GM12878 (cell line): ENCODE measurements at regions of chr1 and their contacts with region 1.

Region 1: DNA sequence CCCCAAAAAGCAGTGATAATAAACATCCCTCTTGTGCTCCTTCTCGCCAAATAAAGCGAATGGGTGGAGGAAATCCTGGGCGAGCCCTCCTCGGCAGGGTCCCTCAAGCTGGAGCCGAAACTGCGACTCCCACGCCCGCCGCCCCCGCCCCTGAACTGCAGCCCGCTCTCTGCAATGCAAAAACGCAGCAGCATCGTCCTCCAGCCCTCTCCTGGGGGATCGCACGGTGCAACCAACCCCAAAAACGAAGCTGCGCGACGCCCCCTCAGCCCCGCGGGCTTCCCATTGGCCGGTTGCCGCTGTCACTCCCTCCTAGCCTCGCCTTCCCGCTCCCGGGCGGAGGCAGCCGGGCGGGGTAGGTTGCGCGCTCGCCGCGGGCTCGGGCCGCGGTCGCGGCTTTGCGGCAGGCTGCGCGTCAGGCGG is at the start of gene TMCC2:
- DNase-seq: no peak
- ATAC-seq: peak; percentile 85
- H3K4me3 ChIP-seq: peak within 1 kb of the TSS; percentile 56
- H3K27ac ChIP-seq: no peak within 1 kb of the TSS
- H3K4me1 ChIP-seq: peaks cover 30% of the 10 kb centered on the region
- H3K27me3 ChIP-seq: peaks cover 2 to 15% of the 10 kb centered on the region in 2 experiments; a peak in 3 of 4 replicates
- CTCF ChIP-seq: no peak
- EP300 ChIP-seq: no peak
- POLR2A ChIP-seq: no peak
- RAD21 ChIP-seq: no peak
- polyA plus RNA-seq, gene TMCC2: 0.06 to 0.18 TPM

Region 2: GRCh38 chr1:204975570-204976235 is 251.9 kb before region 1 on chr1:
- CTCF ChIA-PET with region 1: interaction called, 12 read pairs
- POLR2A ChIA-PET with region 1: no interaction called
- RAD21 ChIA-PET with region 1: interaction called, 8 read pairs
- SMC1A ChIA-PET with region 1: interaction called, 3 read pairs
- in situ Hi-C with region 1: no loop called
- intact Hi-C with region 1: no loop called
- DNase-seq: no peak
- ATAC-seq: peak; percentile 90
- H3K4me3 ChIP-seq: no peak overlapping the region
- H3K27ac ChIP-seq: no peak overlapping the region
- H3K4me1 ChIP-seq: peaks cover 6% of the 10 kb centered on the region
- H3K27me3 ChIP-seq: peaks cover 0 to 5% of the 10 kb centered on the region in 2 experiments; a peak in 3 of 4 replicates
- CTCF ChIP-seq: peak; percentile 84 to 89 (median 88)
- EP300 ChIP-seq: no peak
- POLR2A ChIP-seq: no peak
- RAD21 ChIP-seq: peak; percentile 79

Region 3: DNA sequence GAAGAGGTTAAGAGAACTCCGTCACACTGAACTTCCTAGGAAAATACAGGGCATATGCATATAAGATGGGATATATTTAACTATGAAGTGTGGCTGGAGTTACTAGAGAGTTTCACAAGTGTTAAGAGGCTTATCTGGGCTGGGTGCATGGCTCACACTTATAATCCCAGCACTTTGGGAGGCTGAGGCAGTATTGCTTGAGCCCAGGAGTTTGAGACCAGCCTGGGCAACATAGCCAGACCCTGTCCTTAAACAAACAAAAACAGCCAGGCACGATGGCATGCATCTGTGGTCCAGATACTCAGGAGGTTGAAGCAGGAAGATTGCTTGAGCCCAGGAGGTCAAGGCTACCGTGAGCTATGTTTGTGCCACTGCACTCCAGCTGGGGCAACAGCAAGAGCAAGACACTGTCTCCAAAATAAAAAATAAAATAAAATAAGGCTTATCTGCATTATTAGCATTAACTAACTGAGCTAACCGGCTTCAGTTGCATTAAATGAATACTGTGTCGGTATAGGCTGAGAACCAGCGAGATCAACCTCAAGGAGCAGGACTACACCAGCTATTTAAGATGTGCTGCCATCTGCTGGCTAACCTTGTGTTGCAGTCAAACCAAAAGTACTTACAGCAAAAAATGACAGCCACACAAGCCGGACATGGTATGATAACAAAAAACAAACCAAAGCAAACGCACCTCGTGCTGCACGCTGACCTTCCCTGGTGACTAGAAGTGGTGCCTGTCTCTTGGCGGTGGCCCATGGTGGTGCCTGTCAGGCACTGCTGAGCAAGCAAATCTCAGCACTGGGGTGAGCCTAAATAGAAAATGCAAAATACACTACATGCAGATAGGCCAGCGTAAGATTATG is 86.1 kb before region 1 on chr1:
- CTCF ChIA-PET with region 1: interaction called, 19 read pairs
- POLR2A ChIA-PET with region 1: no interaction called
- RAD21 ChIA-PET with region 1: interaction called, 6 read pairs
- SMC1A ChIA-PET with region 1: interaction called, 3 read pairs
- in situ Hi-C with region 1: no loop called
- intact Hi-C with region 1: no loop called
- DNase-seq: peak; percentile 30
- ATAC-seq: peak; percentile 97
- H3K4me3 ChIP-seq: no peak overlapping the region
- H3K27ac ChIP-seq: no peak overlapping the region
- H3K4me1 ChIP-seq: peaks cover 4% of the 10 kb centered on the region; the same call in 1 of the 2 replicates
- H3K27me3 ChIP-seq: no peaks in the 10 kb centered on the region
- CTCF ChIP-seq: peak; percentile 70 to 79 (median 72)
- EP300 ChIP-seq: no peak
- POLR2A ChIP-seq: no peak
- RAD21 ChIP-seq: peak; percentile 59

Region 4: GRCh38 chr1:205211169-205211838 is 16.3 kb before region 1 on chr1 and contains the start of gene DSTYK:
- CTCF ChIA-PET with region 1: interaction called, 9 read pairs
- POLR2A ChIA-PET with region 1: no interaction called
- RAD21 ChIA-PET with region 1: interaction called, 12 read pairs
- SMC1A ChIA-PET with region 1: interaction called, 7 read pairs
- in situ Hi-C with region 1: no loop called
- intact Hi-C with region 1: no loop called
- DNase-seq: peak; percentile 70
- ATAC-seq: peak; percentile 89
- H3K4me3 ChIP-seq: peak within 1 kb of the TSS; percentile 88
- H3K27ac ChIP-seq: peak within 1 kb of the TSS; percentile 42
- H3K4me1 ChIP-seq: peaks cover 8% of the 10 kb centered on the region; the same call in 1 of the 2 replicates
- H3K27me3 ChIP-seq: no peaks in the 10 kb centered on the region
- CTCF ChIP-seq: 0 out of 6 replicates have a peak, but pooled peaks of 1 of the 3 experiments have one; percentile 1
- EP300 ChIP-seq: peak in 1 of 2 experiments; percentile 48; a peak in 2 of 4 replicates
- POLR2A ChIP-seq: peak; percentile 91
- RAD21 ChIP-seq: no peak
- polyA plus RNA-seq, gene DSTYK: 2.7 to 3.4 TPM

Region 5: GRCh38 chr1:205248793-205249601 is 21.4 kb after region 1 on chr1:
- CTCF ChIA-PET with region 1: interaction called, 836 read pairs
- POLR2A ChIA-PET with region 1: interaction called, 75 read pairs
- RAD21 ChIA-PET with region 1: interaction called, 728 read pairs
- SMC1A ChIA-PET with region 1: interaction called, 427 read pairs
- in situ Hi-C with region 1: no loop called
- intact Hi-C with region 1: no loop called
- DNase-seq: no peak
- ATAC-seq: no peak
- H3K4me3 ChIP-seq: no peak overlapping the region
- H3K27ac ChIP-seq: no peak overlapping the region
- H3K4me1 ChIP-seq: no peaks in the 10 kb centered on the region
- H3K27me3 ChIP-seq: peaks cover 2 to 3% of the 10 kb centered on the region in 2 experiments; a peak in 3 of 4 replicates
- CTCF ChIP-seq: no peak
- EP300 ChIP-seq: no peak
- POLR2A ChIP-seq: no peak
- RAD21 ChIP-seq: no peak

Region 6: DNA sequence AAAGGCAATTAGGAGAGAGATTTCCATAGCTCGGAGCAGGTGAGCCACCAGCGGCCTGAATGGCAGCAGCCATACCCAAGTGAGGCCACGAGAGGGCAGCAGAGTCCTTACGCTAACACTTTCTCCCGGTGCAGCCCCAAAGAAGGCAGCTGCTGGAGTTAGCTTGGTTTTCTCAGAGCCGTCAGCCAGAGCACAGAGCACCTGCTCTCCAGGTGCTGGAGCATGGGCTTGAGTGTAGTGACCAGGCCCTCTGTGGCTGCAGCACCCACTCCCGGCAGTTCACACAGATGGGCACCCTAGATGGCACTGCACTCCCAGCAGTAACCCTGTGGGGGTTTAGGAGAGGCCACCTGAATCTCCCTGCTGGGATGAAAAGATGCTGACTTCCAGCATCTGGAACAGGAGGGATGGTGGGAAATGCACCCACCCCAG is 46.0 kb after region 1 on chr1:
- CTCF ChIA-PET with region 1: interaction called, 32 read pairs
- POLR2A ChIA-PET with region 1: interaction called, 3 read pairs
- RAD21 ChIA-PET with region 1: interaction called, 63 read pairs
- SMC1A ChIA-PET with region 1: interaction called, 20 read pairs
- in situ Hi-C with region 1: no loop called
- intact Hi-C with region 1: no loop called
- DNase-seq: peak; percentile 32
- ATAC-seq: peak; percentile 90
- H3K4me3 ChIP-seq: no peak overlapping the region
- H3K27ac ChIP-seq: no peak overlapping the region
- H3K4me1 ChIP-seq: peaks cover 3% of the 10 kb centered on the region; the same call in 1 of the 2 replicates
- H3K27me3 ChIP-seq: peaks cover 0 to 2% of the 10 kb centered on the region in 2 experiments; a peak in 1 of 4 replicates
- CTCF ChIP-seq: peak; percentile 92 to 98 (median 98)
- EP300 ChIP-seq: peak in 1 of 2 experiments; percentile 38; a peak in 1 of 4 replicates
- POLR2A ChIP-seq: no peak
- RAD21 ChIP-seq: peak; percentile 96

Region 7: GRCh38 chr1:205313563-205314308 is 86.1 kb after region 1 on chr1:
- CTCF ChIA-PET with region 1: interaction called, 17 read pairs
- POLR2A ChIA-PET with region 1: interaction called, 6 read pairs
- RAD21 ChIA-PET with region 1: interaction called, 21 read pairs
- SMC1A ChIA-PET with region 1: interaction called, 10 read pairs
- in situ Hi-C with region 1: no loop called
- intact Hi-C with region 1: no loop called
- DNase-seq: peak; percentile 48
- ATAC-seq: peak; percentile 86
- H3K4me3 ChIP-seq: peak overlapping the region; percentile 35; the same call in 1 of the 2 replicates
- H3K27ac ChIP-seq: no peak overlapping the region; the same call in 1 of the 2 replicates
- H3K4me1 ChIP-seq: peaks cover 30% of the 10 kb centered on the region
- H3K27me3 ChIP-seq: no peaks in the 10 kb centered on the region; a peak in 1 of 4 replicates
- CTCF ChIP-seq: no peak
- EP300 ChIP-seq: peak; percentile 68; a peak in 2 of 4 replicates
- POLR2A ChIP-seq: no peak; the same call in 1 of the 2 replicates
- RAD21 ChIP-seq: no peak

Region 8: DNA sequence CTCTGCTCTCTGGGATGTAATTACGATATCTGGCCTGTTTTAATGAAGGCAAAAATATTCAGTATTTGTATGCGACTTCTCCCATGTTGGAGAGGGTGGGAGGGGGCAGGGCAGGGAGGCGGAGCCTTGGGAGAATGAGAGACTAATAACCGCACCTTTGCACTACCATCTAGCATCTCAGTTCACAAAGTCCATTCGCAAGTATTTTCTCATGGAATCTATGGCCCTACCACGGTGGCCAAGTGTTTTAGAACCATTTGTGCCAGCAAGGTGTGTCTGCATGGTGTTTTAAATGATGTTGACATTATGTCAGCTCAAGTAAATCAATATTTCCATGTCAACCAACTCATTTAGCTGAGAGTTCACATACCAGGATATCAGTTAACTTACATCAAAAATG is 242.5 kb after region 1 on chr1:
- CTCF ChIA-PET with region 1: no interaction called
- POLR2A ChIA-PET with region 1: no interaction called
- RAD21 ChIA-PET with region 1: no interaction called
- SMC1A ChIA-PET with region 1: no interaction called
- in situ Hi-C with region 1: no loop called
- intact Hi-C with region 1: no loop called
- DNase-seq: no peak
- ATAC-seq: no peak
- H3K4me3 ChIP-seq: no peak overlapping the region
- H3K27ac ChIP-seq: no peak overlapping the region
- H3K4me1 ChIP-seq: no peaks in the 10 kb centered on the region
- H3K27me3 ChIP-seq: peaks cover 0 to 5% of the 10 kb centered on the region in 2 experiments; a peak in 3 of 4 replicates
- CTCF ChIP-seq: no peak
- EP300 ChIP-seq: no peak
- POLR2A ChIP-seq: no peak
- RAD21 ChIP-seq: no peak

Region 9: DNA sequence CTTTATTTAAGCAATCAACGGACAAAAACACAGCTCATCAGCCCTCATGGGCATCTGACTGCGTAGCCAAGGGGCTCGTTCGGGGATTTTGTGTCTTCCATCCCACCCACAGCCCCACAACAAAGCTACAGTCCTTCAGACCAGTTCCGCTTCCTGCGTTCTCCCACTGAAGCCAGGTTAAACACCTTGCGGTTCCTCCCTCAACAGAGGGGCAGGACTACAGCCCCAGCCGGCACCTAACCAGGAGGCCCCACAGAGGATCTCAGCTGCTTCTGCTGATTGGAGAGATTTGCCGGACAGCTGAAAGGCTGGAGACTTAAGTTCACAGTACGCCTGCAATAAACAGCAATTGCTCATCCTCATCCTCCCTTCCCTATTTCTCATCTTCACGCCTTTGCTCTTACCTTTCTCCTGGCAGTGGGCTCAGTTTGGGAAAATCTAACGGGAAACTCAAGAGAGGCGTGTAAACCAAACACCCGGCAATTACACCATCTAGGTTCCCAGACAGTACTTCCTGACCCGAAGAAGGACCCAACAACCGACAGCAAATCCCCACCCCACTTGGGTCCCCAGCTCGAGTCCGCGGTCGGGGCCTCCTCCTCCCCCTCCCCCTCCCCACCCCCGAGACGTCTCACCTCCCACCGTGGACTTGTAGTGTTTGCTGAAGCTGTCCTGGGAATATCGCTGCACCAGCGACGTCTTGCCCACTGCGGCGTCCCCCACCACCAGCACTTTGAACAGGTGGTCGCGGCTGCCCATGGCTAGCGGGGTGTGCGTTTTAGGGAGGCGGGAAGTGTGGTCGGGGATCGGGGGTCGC is 546.8 kb after region 1 on chr1:
- CTCF ChIA-PET with region 1: no interaction called
- POLR2A ChIA-PET with region 1: no interaction called
- RAD21 ChIA-PET with region 1: no interaction called
- SMC1A ChIA-PET with region 1: no interaction called
- in situ Hi-C with region 1: no loop called
- intact Hi-C with region 1: no loop called
- DNase-seq: peak; percentile 58
- ATAC-seq: peak; percentile 76
- H3K4me3 ChIP-seq: peak overlapping the region; percentile 88
- H3K27ac ChIP-seq: peak overlapping the region; percentile 63
- H3K4me1 ChIP-seq: peaks cover 12% of the 10 kb centered on the region
- H3K27me3 ChIP-seq: no peaks in the 10 kb centered on the region
- CTCF ChIP-seq: no peak
- EP300 ChIP-seq: no peak
- POLR2A ChIP-seq: peak; percentile 7; the same call in 1 of the 2 replicates
- RAD21 ChIP-seq: no peak